Left cardiac atrium (tissue), 4 donors: ENCODE measurements at regions of chr5 and their contacts with region 1.

Region 1: DNA sequence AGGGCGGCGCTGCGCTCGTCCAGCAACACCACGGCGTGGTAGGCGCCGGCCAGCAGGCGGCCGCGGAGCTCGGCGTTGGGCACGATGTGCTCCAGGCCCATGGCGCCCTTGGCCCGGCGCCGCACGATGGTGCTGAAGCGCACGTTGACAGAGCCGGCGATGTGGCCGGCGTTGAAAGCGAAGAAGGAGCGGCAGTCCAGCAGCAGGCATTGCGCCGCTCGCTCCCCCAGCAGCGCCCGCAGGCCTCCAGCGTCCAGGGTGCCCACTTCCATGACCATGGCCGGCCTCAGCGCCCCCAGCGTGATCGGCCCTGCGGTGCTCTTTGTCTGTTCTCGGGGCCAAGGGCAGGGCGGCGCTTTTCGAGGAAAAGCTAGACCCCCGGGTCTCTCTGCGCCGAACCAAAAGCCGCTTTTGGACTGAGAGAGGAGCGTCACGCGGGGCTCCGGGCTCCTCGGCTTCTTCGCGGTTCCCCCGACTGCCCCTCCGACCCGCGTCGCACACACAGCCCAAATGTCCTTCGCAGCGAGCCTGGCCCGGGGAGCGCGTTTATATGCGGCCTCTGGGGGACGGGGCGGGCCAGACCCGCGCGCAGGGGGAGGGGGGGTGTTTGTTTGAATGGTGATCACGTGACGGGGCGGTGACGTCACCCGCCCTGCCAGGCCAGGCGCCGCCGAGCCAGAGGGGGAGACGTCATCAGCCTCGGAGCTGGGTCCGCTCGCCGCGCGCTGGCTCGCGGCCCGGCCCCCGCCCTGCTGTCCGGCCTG is at the start of gene DUSP1:
- DNase-seq: peak; percentile 100
- ATAC-seq: peak; percentile 72 to 74
- total RNA-seq, gene DUSP1: 126 to 228 TPM

Region 2: GRCh38 chr5:172095502-172096206 is 675.2 kb before region 1 on chr5:
- intact Hi-C with region 1: no loop called
- DNase-seq: no peak
- ATAC-seq: peak; percentile 23 to 28

Region 3: GRCh38 chr5:172860520-172861443 is 89.9 kb after region 1 on chr5:
- intact Hi-C with region 1: loop called (anchors 2 to 5 kb)
- DNase-seq: peak; percentile 91
- ATAC-seq: peak; percentile 92 to 93

Region 4: GRCh38 chr5:172902497-172903200 is 131.8 kb after region 1 on chr5:
- intact Hi-C with region 1: loop called (anchors 10 kb)
- DNase-seq: peak; percentile 82
- ATAC-seq: peak; percentile 52 to 68

Region 5: GRCh38 chr5:172932313-172933017 is 161.6 kb after region 1 on chr5:
- intact Hi-C with region 1: loop called (anchors 5 to 10 kb)
- DNase-seq: peak; percentile 83
- ATAC-seq: peak; percentile 82 to 83